B cell (primary cell): ENCODE measurements at regions of chr20 and their contacts with region 1.

Region 1: DNA sequence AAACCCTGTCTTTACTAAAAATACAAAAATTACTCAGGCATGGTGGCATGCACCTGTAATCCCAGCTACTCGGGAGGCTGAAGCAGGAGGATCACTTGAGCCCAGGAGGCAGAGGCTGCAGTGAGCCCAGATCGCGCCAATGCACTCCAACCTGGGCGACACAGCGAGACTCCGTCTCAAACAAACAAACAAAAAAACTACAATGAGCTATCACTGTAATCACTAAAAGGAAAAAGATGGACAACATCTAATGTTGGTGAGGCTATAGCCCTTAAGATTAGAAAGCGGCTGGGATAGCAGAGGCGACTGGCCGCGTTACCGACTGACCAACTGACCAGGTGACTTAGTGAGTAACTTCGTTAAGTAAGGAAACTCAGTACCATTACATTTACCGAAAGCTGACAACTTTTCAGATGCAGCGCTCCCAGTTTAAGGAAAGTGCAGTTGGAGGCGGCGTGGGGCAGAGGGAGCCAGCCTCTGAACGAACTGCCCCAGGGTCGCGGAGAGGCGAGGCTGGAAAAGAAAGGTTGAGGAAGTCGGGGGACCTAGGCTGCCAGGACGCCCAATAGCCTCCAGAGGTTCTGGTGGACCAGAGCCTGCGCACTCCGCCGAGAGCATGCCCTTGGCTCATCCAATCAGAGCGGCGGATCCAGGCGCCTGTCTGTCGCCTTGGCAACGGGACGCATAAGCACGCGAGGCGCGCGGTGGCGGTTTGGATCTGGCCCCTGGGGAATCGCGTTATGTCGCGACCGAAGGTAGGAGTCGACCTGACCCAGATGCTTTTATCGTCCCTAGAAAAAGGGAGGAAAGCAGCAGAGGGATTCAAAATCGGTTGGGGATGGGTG is 8.9 kb downstream of the TTLL9 start:
- DNase-seq: peak; percentile 92
- ATAC-seq: peak; percentile 89
- H3K4me3 ChIP-seq: peak overlapping the region; percentile 62 to 75 (median 66)
- H3K4me3 Mint-ChIP-seq: peak overlapping the region; percentile 97
- H3K27ac ChIP-seq: peak overlapping the region in 1 of 2 donors; percentile 71
- H3K27ac Mint-ChIP-seq: peak overlapping the region; percentile 97
- H3K4me1 ChIP-seq: peaks cover 8 to 11% of the 10 kb centered on the region in 2 donors
- H3K4me1 Mint-ChIP-seq: peaks cover 13% of the 10 kb centered on the region
- H3K27me3 ChIP-seq: no peaks in the 10 kb centered on the region
- H3K27me3 Mint-ChIP-seq: no peaks in the 10 kb centered on the region
- CTCF ChIP-seq: no peak

Region 2: DNA sequence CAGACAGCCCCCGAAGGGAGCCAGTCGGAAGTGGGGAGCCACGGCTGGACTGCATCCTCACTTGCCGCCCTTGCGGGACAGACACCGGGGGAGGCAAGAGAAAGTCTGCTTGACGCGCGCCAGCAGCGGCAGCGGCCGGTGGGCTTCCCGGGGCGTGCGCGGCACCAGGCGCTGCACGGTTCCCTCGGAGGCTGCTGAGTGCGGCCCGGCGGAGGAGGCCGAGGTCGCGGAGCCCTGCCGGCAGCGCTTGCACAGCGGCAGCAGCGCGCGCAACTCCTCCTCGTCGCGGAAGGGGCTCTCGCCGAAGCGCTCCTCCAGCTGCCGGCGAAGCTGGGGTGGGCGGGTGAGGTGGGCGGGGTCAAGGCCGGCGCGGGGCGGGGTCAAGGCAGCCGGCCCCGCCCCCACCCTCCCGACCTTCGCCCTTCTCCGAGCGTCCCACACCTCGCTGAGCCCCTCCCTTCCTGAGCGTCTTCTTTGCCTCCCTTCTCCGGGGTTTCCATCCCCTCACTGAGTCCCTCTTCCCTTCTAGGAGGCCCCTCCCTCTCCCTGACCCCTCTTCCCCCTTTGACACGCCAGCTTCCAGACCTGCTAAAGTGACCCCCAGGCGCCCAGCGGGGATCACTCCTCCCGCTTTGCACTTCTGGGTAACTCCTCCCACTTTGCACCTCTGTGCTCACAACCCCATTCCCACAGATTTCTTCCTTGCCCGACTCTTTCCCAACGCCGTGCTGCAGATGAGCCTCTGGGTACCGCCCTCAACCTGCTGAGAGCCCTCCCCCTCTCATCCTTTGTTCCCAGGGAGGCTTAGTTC is 17.8 kb before region 1 on chr20:
- CTCF ChIA-PET with region 1: interaction called, 7 read pairs
- POLR2A ChIA-PET with region 1: interaction called, 3 read pairs
- intact Hi-C with region 1: loop called (anchors 1 kb)
- DNase-seq: peak; percentile 81
- ATAC-seq: peak; percentile 83
- H3K4me3 ChIP-seq: peak overlapping the region in 4 of 5 experiments; percentile 42 to 61 (median 54)
- H3K4me3 Mint-ChIP-seq: peak overlapping the region; percentile 75
- H3K27ac ChIP-seq: no peak overlapping the region
- H3K27ac Mint-ChIP-seq: peak overlapping the region; percentile 53
- H3K4me1 ChIP-seq: peaks cover 19 to 26% of the 10 kb centered on the region in 2 donors
- H3K4me1 Mint-ChIP-seq: peaks cover 29% of the 10 kb centered on the region
- H3K27me3 ChIP-seq: peaks cover 0 to 18% (median 10%) of the 10 kb centered on the region in 4 experiments
- H3K27me3 Mint-ChIP-seq: peaks cover 5% of the 10 kb centered on the region
- CTCF ChIP-seq: no peak

Region 3: GRCh38 chr20:31894980-31895675 is 15.8 kb after region 1 on chr20:
- CTCF ChIA-PET with region 1: interaction called, 7 read pairs
- POLR2A ChIA-PET with region 1: interaction called, 9 read pairs
- intact Hi-C with region 1: loop called (anchors 1 kb)
- DNase-seq: peak; percentile 89
- ATAC-seq: peak; percentile 100
- H3K4me3 ChIP-seq: peak overlapping the region in 1 of 5 experiments; percentile 40
- H3K4me3 Mint-ChIP-seq: peak overlapping the region; percentile 28
- H3K27ac ChIP-seq: peak overlapping the region; percentile 94
- H3K27ac Mint-ChIP-seq: peak overlapping the region; percentile 79
- H3K4me1 ChIP-seq: peaks cover 10 to 15% of the 10 kb centered on the region in 2 donors
- H3K4me1 Mint-ChIP-seq: peaks cover 15% of the 10 kb centered on the region
- H3K27me3 ChIP-seq: no peaks in the 10 kb centered on the region
- H3K27me3 Mint-ChIP-seq: no peaks in the 10 kb centered on the region
- CTCF ChIP-seq: no peak

Region 4: DNA sequence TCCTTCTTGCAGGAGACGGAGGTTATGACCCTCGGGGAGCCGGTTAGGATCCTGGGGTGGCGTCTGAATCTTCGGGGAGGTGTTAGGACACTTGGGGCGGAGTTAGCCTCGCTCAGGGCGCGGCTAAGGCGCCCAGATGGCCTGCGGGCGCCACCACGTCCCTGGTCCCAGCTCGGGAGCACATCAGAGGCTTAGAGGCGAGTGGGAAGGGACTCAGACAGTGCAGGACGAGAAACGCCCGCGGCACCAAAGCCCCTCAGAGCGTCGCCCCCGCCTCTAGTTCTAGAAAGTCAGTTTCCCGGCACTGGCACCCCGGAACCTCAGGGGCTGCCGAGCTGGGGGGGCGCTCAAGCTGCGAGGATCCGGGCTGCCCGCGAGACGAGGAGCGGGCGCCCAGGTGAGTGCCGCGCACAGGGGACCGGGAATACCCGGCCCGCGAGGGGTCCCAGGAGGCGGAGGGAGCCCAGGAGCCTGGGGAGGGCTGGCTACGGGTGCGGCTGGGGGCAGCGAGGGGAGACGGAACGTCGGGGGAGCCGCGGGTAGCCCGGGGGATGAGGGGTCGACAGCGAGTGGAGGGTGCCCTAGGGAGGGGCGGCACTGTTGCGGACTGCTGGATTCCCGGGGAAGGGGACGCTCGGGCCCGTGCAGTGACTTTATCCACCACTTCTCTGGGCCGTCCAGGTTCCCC is 172.9 kb after region 1 on chr20 and contains the start of gene HCK:
- CTCF ChIA-PET with region 1: no interaction called
- POLR2A ChIA-PET with region 1: no interaction called
- intact Hi-C with region 1: no loop called
- DNase-seq: peak; percentile 54
- ATAC-seq: peak; percentile 44
- H3K4me3 ChIP-seq: peak within 1 kb of the TSS; percentile 35 to 93 (median 77)
- H3K4me3 Mint-ChIP-seq: peak within 1 kb of the TSS; percentile 90
- H3K27ac ChIP-seq: peak within 1 kb of the TSS; percentile 76 to 82
- H3K27ac Mint-ChIP-seq: peak within 1 kb of the TSS; percentile 90
- H3K4me1 ChIP-seq: peaks cover 33 to 55% of the 10 kb centered on the region in 2 donors
- H3K4me1 Mint-ChIP-seq: peaks cover 45% of the 10 kb centered on the region
- H3K27me3 ChIP-seq: peaks cover 0 to 3% (median 0%) of the 10 kb centered on the region in 4 experiments
- H3K27me3 Mint-ChIP-seq: no peaks in the 10 kb centered on the region
- CTCF ChIP-seq: no peak
- total RNA-seq, gene HCK: 48.1 and 48.6 TPM in 2 replicates

Region 5: GRCh38 chr20:32109392-32110172 is 230.2 kb after region 1 on chr20 and contains the start of gene TM9SF4:
- CTCF ChIA-PET with region 1: no interaction called
- POLR2A ChIA-PET with region 1: interaction called, 4 read pairs
- intact Hi-C with region 1: loop called (anchors 1 kb)
- DNase-seq: peak; percentile 97
- ATAC-seq: peak; percentile 90
- H3K4me3 ChIP-seq: peak within 1 kb of the TSS; percentile 87 to 96 (median 95)
- H3K4me3 Mint-ChIP-seq: peak within 1 kb of the TSS; percentile 99
- H3K27ac ChIP-seq: peak within 1 kb of the TSS; percentile 99
- H3K27ac Mint-ChIP-seq: peak within 1 kb of the TSS; percentile 99
- H3K4me1 ChIP-seq: peaks cover 8 to 9% of the 10 kb centered on the region in 2 donors
- H3K4me1 Mint-ChIP-seq: peaks cover 36% of the 10 kb centered on the region
- H3K27me3 ChIP-seq: no peaks in the 10 kb centered on the region
- H3K27me3 Mint-ChIP-seq: no peaks in the 10 kb centered on the region
- CTCF ChIP-seq: no peak
- total RNA-seq, gene TM9SF4: 50.4 and 53.8 TPM in 2 replicates